MCF 10A (cell line): ENCODE measurements at regions of chr7 and their contacts with region 1.

Region 1: GRCh38 chr7:77561352-77561751 is 24.3 kb downstream of the PTPN12 start:
- DNase-seq: no peak
- H3K4me3 Mint-ChIP-seq: no peak overlapping the region
- H3K27ac Mint-ChIP-seq: peak overlapping the region; percentile 51
- H3K4me1 Mint-ChIP-seq: peaks cover 40% of the 10 kb centered on the region
- H3K27me3 Mint-ChIP-seq: no peaks in the 10 kb centered on the region
- CTCF ChIP-seq: no peak

Region 2: DNA sequence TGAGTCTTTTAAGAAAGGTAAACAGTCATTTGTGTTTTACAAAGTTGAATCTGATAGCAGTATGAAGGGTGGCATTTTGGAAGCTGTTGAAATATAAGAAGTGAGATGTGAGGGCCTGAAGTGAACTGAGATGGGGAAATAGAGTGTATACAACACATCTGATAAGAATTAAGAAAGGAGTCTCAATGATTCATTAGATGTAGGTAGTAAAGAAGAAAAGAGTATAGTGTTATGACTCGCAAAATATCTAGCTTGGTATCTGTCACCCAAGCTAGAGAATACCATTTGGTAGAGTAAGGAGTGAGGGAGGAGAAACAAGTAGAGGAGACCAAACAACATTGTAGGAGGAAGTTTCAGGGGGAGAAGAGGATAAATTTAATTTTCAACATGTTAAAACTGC is 18.9 kb before region 1 on chr7:
- CTCF ChIA-PET with region 1: interaction called, 5 read pairs
- POLR2A ChIA-PET with region 1: interaction called, 62 read pairs
- intact Hi-C with region 1: no loop called
- DNase-seq: no peak
- H3K4me3 Mint-ChIP-seq: peak overlapping the region; percentile 4
- H3K27ac Mint-ChIP-seq: peak overlapping the region; percentile 54
- H3K4me1 Mint-ChIP-seq: peaks cover 30% of the 10 kb centered on the region
- H3K27me3 Mint-ChIP-seq: no peaks in the 10 kb centered on the region
- CTCF ChIP-seq: no peak

Region 3: DNA sequence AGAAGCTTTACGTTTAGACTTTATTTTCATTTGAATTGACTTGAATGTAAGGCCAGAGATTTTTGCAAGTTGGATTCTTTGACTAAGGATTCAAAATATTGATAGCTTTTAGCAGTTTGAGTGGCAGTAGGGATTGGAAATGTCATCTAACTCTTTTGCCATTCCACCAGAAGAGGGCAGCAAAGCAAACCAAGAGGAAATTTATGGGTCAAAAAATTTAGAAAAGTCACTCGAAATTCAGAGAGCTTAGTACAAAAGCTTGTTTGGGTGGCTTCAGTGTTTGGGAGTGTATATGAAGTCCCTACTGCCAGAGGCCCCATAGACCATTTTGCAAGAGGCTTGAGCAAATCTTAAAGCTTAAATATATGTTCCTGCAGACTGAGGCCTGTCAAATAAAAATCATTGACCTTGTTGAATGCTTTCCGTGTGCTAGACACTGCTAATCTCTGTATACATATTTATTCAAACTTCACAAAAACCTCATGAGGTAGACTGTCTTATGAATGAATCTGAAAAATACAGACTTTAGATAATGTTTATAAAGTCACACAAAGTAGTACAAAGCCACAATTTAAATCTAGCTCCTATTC is 90.3 kb after region 1 on chr7:
- CTCF ChIA-PET with region 1: no interaction called
- POLR2A ChIA-PET with region 1: no interaction called
- intact Hi-C with region 1: no loop called
- DNase-seq: peak; percentile 61
- H3K4me3 Mint-ChIP-seq: no peak overlapping the region
- H3K27ac Mint-ChIP-seq: no peak overlapping the region
- H3K4me1 Mint-ChIP-seq: no peaks in the 10 kb centered on the region
- H3K27me3 Mint-ChIP-seq: no peaks in the 10 kb centered on the region
- CTCF ChIP-seq: peak; percentile 66

Region 4: GRCh38 chr7:78379148-78379547 is 817.8 kb after region 1 on chr7:
- CTCF ChIA-PET with region 1: no interaction called
- POLR2A ChIA-PET with region 1: no interaction called
- intact Hi-C with region 1: no loop called
- DNase-seq: no peak
- H3K4me3 Mint-ChIP-seq: no peak overlapping the region
- H3K27ac Mint-ChIP-seq: no peak overlapping the region
- H3K4me1 Mint-ChIP-seq: no peaks in the 10 kb centered on the region
- H3K27me3 Mint-ChIP-seq: peaks cover 68% of the 10 kb centered on the region
- CTCF ChIP-seq: no peak